AG04450 (cell line): ENCODE measurements at regions of chr2 and their contacts with region 1.

Region 1: DNA sequence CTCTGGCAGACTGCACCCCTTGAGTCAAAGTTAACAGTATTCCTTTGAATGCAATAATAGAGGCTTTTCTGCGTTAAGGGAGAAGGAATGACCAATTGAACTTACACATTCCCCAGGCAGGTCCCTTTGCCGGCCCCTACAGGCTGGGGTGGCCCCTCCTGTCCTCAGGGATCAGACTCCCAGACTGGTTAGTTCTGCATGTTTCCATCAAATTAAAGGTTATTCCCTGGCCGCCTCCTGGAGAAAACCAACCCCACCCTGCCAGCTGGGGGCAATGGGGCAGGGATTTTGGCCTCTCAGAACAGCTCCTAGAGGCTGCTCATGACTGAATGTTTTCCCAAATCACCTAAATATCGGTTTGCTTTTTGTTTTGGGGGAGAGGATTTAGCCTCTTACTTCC is 199.6 kb downstream of the MGAT5 start:
- DNase-seq: no peak
- H3K4me3 ChIP-seq: no peak overlapping the region
- H3K27ac ChIP-seq: no peak overlapping the region
- H3K27me3 ChIP-seq: no peaks in the 10 kb centered on the region
- CTCF ChIP-seq: no peak

Region 2: DNA sequence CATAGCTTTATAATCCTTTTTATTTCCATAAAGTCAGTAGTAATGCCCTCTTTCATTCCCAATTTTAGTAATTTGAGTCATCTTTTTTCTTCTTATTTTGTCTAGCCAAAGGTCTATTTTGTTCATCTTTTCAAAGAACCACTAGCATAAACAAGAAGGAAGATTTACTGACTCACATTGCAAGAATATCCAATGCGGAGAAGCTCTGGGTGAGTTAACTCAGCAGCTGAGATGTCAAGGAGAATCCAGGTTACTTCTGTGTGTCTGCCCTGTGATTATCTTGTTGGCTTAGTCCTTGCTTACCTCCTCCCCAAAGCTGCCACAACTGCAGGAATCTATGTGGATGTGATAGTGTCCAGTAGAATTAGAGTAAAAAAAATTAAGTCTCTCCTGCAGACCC is 573.8 kb before region 1 on chr2:
- CTCF ChIA-PET with region 1: interaction called, 96 read pairs
- POLR2A ChIA-PET with region 1: no interaction called
- DNase-seq: peak; percentile 21
- H3K4me3 ChIP-seq: no peak overlapping the region
- H3K27ac ChIP-seq: no peak overlapping the region
- H3K27me3 ChIP-seq: peaks cover 5% of the 10 kb centered on the region
- CTCF ChIP-seq: no peak

Region 3: GRCh38 chr2:134118279-134119116 is 335.0 kb before region 1 on chr2:
- CTCF ChIA-PET with region 1: interaction called, 72 read pairs
- POLR2A ChIA-PET with region 1: no interaction called
- DNase-seq: peak; percentile 90
- H3K4me3 ChIP-seq: no peak overlapping the region
- H3K27ac ChIP-seq: peak overlapping the region; percentile 69
- H3K27me3 ChIP-seq: no peaks in the 10 kb centered on the region
- CTCF ChIP-seq: peak; percentile 81

Region 4: DNA sequence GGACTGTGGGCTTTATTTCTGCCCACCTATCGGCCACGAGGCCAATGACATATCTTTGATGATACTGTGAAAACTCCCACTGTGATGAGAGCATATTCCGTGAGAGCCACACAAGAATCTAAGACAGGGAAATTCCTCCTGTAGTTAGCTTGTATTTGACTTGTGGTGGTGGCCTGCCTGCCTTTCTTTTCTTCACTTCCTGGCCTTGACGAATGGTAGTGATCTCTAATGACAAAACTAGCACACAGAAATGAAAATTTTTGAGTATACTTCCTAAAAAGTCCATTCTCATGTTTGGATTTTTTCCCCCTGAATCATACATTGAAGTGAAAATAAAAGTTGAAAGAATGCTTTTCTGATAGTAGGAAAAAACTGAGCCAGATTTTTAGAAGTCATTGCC is 105.2 kb before region 1 on chr2:
- CTCF ChIA-PET with region 1: interaction called, 17 read pairs
- POLR2A ChIA-PET with region 1: no interaction called
- DNase-seq: no peak
- H3K4me3 ChIP-seq: no peak overlapping the region
- H3K27ac ChIP-seq: peak overlapping the region; percentile 40
- H3K27me3 ChIP-seq: no peaks in the 10 kb centered on the region
- CTCF ChIP-seq: no peak

Region 5: DNA sequence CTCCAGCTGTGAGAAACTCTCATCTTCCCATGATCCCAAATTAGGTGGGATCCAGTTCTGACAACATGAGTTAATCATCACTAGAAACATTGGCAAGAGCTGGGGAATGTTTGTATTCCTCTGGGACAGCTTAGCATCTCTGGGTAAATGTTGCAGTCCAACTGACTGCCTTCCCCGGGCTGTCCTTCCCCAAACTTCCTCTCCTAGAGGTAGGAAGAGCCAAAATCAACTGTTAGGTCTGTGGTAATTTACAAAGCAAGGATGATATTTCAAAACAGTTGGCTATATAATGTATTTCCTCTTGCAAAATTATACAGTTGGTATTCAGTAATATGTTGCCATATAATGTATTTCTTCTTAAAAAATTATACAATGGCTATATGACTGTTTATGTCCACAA is 51.1 kb before region 1 on chr2:
- CTCF ChIA-PET with region 1: interaction called, 13 read pairs
- POLR2A ChIA-PET with region 1: no interaction called
- DNase-seq: no peak
- H3K4me3 ChIP-seq: no peak overlapping the region
- H3K27ac ChIP-seq: no peak overlapping the region
- H3K27me3 ChIP-seq: no peaks in the 10 kb centered on the region
- CTCF ChIP-seq: no peak

Region 6: DNA sequence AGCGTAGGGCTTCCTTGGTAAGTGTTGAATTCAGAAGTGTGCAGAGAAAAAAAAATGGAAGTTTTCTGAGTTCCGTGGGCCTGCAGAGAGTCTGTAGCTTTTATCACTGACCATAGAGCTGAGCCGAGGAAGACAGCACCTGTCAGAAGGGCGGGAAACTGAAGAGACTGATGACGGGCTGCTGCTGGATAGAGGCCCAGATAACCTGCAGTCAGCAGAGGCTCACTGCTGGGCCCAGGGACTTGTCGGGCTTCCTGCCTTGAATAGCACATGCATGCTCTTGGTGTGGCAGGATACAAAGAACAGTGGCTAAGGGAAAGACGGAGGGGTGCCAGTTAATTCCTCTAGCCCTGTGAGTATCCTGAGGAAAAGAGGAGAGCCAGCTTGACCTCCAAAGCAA is 33.2 kb before region 1 on chr2:
- CTCF ChIA-PET with region 1: interaction called, 34 read pairs
- POLR2A ChIA-PET with region 1: interaction called, 3 read pairs
- DNase-seq: no peak
- H3K4me3 ChIP-seq: no peak overlapping the region
- H3K27ac ChIP-seq: no peak overlapping the region
- H3K27me3 ChIP-seq: no peaks in the 10 kb centered on the region
- CTCF ChIP-seq: no peak

Region 7: DNA sequence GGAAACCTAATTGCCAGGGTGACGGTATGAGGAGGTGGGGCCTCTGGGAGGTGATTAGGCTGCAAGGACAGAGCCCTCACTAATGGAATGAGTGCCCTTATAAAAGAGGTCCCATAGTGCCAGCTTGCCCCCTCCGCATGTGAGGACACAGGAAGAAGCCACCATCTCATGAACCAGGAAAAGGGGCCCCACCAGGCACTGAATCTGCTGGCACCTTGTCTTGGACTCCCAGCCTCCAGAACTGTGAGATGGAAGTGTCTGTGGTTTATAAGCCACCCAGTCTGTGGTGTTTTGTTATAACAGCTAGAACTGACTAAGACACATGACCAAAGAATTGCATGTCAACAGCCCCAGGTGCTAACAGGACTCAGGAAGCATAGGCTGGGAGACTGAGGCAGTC is 14.7 kb after region 1 on chr2:
- CTCF ChIA-PET with region 1: interaction called, 11 read pairs
- POLR2A ChIA-PET with region 1: no interaction called
- DNase-seq: no peak
- H3K4me3 ChIP-seq: no peak overlapping the region
- H3K27ac ChIP-seq: no peak overlapping the region
- H3K27me3 ChIP-seq: peaks cover 6% of the 10 kb centered on the region
- CTCF ChIP-seq: no peak